ENCODE measurements at regions of chr11 and their contacts with region 1.

Region 1: DNA sequence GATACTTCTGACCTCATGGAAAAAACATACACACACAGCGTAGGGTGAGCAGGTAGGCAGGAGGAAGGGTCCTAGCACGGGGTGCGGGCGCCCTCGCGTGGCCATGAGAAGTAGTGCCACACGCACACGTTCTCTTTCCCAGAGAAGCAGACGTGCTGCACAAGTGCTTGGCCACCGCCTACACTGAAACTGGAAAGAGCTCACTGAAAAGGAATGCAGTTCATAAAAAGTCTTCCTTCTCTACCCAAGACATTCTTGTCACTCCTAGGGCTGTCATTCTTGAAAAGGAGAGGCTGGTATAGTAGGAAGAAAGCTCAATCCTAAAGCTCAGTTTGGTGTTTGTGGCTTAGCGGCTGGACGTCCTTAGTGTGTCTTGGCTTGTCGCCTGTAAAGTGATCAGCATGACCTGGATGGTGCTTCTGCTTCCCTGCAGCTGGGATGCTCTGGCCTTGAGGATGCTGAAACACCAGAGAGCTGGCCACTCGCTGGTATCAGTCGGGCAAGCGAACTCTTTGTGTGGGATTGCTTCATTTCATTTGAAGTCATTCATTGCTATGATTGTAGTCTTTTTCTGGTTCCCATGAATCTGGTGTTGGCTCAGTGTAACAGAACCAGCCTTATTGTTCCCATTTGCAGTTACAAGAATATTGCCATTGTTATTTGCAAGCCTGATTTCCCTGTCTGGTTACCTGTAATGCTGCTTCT is 303.8 kb downstream of the NTM start:
- DNase-seq: peak; percentile 74 to 88
- H3K4me3 ChIP-seq: no peak overlapping the region
- H3K4me3 Mint-ChIP-seq: no peak overlapping the region
- H3K27ac Mint-ChIP-seq: no peak overlapping the region
- H3K4me1 ChIP-seq: no peaks in the 10 kb centered on the region
- H3K4me1 Mint-ChIP-seq: no peaks in the 10 kb centered on the region
- H3K27me3 ChIP-seq: no peaks in the 10 kb centered on the region
- H3K27me3 Mint-ChIP-seq: peaks cover 18% of the 10 kb centered on the region
- CTCF ChIP-seq: peak; percentile 99 to 100

Region 2: DNA sequence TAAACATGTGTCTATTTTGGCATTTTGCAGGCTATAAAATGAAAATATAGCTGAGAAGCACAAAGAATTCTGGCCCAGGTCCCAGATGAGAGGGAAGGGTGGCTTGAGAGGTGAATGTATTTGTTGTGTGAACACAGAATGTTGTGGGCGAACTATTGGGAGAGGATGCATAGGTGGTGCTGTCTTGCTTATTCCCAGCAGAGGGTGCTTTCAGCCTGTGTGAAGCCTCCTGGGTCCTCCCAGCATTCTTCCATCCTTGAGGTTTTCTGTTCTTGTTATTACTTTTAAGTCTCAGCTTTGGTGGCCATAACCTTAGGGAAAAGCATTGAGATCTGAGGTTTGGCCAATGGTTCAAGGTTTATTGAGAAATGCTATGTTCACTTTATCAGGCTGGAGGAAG is 649.2 kb before region 1 on chr11:
- CTCF ChIA-PET with region 1: interaction called, 3 read pairs
- POLR2A ChIA-PET with region 1: no interaction called
- intact Hi-C with region 1: loop called (anchors 1 kb)
- DNase-seq: peak in 1 of 2 experiments; percentile 44
- H3K4me3 ChIP-seq: no peak overlapping the region
- H3K4me3 Mint-ChIP-seq: no peak overlapping the region
- H3K27ac Mint-ChIP-seq: no peak overlapping the region
- H3K4me1 ChIP-seq: no peaks in the 10 kb centered on the region
- H3K4me1 Mint-ChIP-seq: no peaks in the 10 kb centered on the region
- H3K27me3 ChIP-seq: no peaks in the 10 kb centered on the region
- H3K27me3 Mint-ChIP-seq: peaks cover 33% of the 10 kb centered on the region
- CTCF ChIP-seq: peak; percentile 67 to 77

Region 3: GRCh38 chr11:131064373-131064991 is 609.7 kb before region 1 on chr11:
- CTCF ChIA-PET with region 1: interaction called, 18 read pairs
- POLR2A ChIA-PET with region 1: no interaction called
- intact Hi-C with region 1: loop called (anchors 1 kb)
- DNase-seq: peak; percentile 77 to 84
- H3K4me3 ChIP-seq: no peak overlapping the region
- H3K4me3 Mint-ChIP-seq: no peak overlapping the region
- H3K27ac Mint-ChIP-seq: no peak overlapping the region
- H3K4me1 ChIP-seq: peaks cover 7% of the 10 kb centered on the region
- H3K4me1 Mint-ChIP-seq: peaks cover 10% of the 10 kb centered on the region
- H3K27me3 ChIP-seq: no peaks in the 10 kb centered on the region
- H3K27me3 Mint-ChIP-seq: peaks cover 10% of the 10 kb centered on the region
- CTCF ChIP-seq: peak; percentile 97 to 99

Region 4: DNA sequence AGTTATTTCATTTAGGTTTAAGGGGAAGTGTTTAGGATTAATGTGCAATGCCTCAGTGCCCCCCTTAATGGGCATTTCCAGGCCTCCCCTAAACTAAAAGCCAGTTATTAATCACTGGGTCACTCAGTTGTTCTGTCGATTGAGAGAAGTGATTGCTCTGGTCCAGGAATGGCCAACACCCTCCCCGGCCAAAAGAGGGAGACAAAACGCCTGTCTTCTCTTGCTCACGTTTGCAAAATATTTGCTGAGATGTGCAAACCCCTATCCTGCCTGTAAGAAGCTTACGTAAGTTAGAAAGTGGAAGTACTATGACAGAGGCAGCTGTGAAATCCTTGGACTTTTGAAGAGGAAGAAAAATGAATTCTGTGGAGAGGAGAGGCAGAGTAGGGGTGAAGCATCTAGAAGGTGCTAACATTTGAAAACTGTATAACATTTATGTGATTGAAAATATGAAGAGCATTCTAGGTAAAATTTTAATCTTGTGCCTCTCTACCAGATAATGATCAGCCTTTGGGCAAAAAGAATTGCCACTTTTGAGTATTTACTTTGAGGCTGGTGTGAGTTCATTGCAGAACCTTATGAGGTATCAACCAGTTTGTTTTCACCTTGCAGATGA is 266.1 kb before region 1 on chr11:
- CTCF ChIA-PET with region 1: interaction called, 3 read pairs
- POLR2A ChIA-PET with region 1: no interaction called
- intact Hi-C with region 1: loop called (anchors 1 kb)
- DNase-seq: peak; percentile 62 to 74
- H3K4me3 ChIP-seq: no peak overlapping the region
- H3K4me3 Mint-ChIP-seq: no peak overlapping the region
- H3K27ac Mint-ChIP-seq: no peak overlapping the region
- H3K4me1 ChIP-seq: no peaks in the 10 kb centered on the region
- H3K4me1 Mint-ChIP-seq: no peaks in the 10 kb centered on the region
- H3K27me3 ChIP-seq: no peaks in the 10 kb centered on the region
- H3K27me3 Mint-ChIP-seq: peaks cover 6% of the 10 kb centered on the region
- CTCF ChIP-seq: peak; percentile 73 to 89

Region 5: GRCh38 chr11:131579932-131580387 is 94.2 kb before region 1 on chr11:
- CTCF ChIA-PET with region 1: interaction called, 15 read pairs
- POLR2A ChIA-PET with region 1: no interaction called
- intact Hi-C with region 1: loop called (anchors 1 kb)
- DNase-seq: peak; percentile 51 to 57
- H3K4me3 ChIP-seq: no peak overlapping the region
- H3K4me3 Mint-ChIP-seq: no peak overlapping the region
- H3K27ac Mint-ChIP-seq: no peak overlapping the region
- H3K4me1 ChIP-seq: no peaks in the 10 kb centered on the region
- H3K4me1 Mint-ChIP-seq: no peaks in the 10 kb centered on the region
- H3K27me3 ChIP-seq: peaks cover 2% of the 10 kb centered on the region; the same call in 1 of the 2 replicates
- H3K27me3 Mint-ChIP-seq: peaks cover 26% of the 10 kb centered on the region
- CTCF ChIP-seq: peak; percentile 76 to 79